Uterus (tissue), 4 donors: ENCODE measurements at regions of chr11 and their contacts with region 1.

Region 1: GRCh38 chr11:8099291-8099899 is 18.4 kb downstream of the TUB start:
- DNase-seq: peak; percentile 77 to 82
- H3K4me3 ChIP-seq: no peak overlapping the region
- H3K27ac ChIP-seq: peak overlapping the region; percentile 51 to 52
- H3K4me1 ChIP-seq: no peaks in the 10 kb centered on the region
- H3K27me3 ChIP-seq: no peaks in the 10 kb centered on the region
- CTCF ChIP-seq: peak; percentile 59 to 83 (median 76)
- POLR2A ChIP-seq: no peak

Region 2: GRCh38 chr11:8006349-8006977 is 92.9 kb before region 1 on chr11:
- intact Hi-C with region 1: loop called (anchors 10 kb)
- DNase-seq: peak; percentile 55 to 67
- H3K4me3 ChIP-seq: no peak overlapping the region
- H3K27ac ChIP-seq: no peak overlapping the region
- H3K4me1 ChIP-seq: no peaks in the 10 kb centered on the region
- H3K27me3 ChIP-seq: no peaks in the 10 kb centered on the region
- CTCF ChIP-seq: peak; percentile 77 to 92 (median 82)
- POLR2A ChIP-seq: no peak

Region 3: GRCh38 chr11:8033305-8034105 is 65.9 kb before region 1 on chr11:
- intact Hi-C with region 1: loop called (anchors 5 kb)
- DNase-seq: peak; percentile 88 to 89
- H3K4me3 ChIP-seq: no peak overlapping the region
- H3K27ac ChIP-seq: no peak overlapping the region
- H3K4me1 ChIP-seq: no peaks in the 10 kb centered on the region
- H3K27me3 ChIP-seq: no peaks in the 10 kb centered on the region
- CTCF ChIP-seq: peak; percentile 89 to 94 (median 92)
- POLR2A ChIP-seq: no peak

Region 4: GRCh38 chr11:8047382-8047781 is 52.0 kb before region 1 on chr11:
- intact Hi-C with region 1: no loop called
- DNase-seq: no peak
- H3K4me3 ChIP-seq: no peak overlapping the region
- H3K27ac ChIP-seq: no peak overlapping the region
- H3K4me1 ChIP-seq: no peaks in the 10 kb centered on the region
- H3K27me3 ChIP-seq: no peaks in the 10 kb centered on the region
- CTCF ChIP-seq: no peak
- POLR2A ChIP-seq: no peak

Region 5: DNA sequence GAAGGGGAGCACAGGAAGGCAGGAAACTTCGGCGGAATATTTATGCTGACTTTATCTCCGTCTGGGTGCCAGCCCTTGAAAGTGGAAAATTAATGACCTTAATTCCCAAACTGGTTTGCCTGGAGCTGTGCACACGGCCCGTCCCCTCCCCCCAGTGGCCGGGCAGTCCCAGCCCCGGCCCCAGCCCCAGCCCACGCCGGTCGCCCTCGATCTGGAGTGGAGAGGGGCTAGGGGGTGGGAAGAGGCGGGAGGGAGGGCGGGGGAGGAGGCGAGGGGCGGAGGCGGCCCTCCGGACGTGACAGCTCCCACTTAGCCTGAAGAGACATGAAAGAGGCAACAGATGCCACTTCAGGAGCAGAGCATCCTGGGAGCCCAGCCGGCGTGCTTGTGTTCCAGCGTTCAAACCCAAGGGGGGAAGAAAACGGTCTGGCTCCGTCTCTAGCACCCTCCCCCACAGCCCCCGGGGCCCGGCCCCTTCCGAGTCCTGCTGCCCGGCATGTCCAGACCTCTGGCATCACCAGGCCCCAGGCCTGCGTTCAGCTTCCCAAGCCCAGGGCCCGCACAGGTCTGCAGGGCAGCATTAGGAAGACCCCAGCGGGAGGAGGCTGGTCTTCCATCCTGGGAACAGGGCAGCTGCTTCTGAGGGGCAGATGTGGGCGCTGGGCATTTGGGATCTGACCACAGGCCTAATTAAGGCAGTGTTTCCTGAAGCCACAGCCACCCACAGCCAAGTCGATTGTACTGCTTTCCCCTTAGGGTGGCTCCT is 184.3 kb after region 1 on chr11:
- intact Hi-C with region 1: no loop called
- DNase-seq: no peak
- H3K4me3 ChIP-seq: peak overlapping the region; percentile 7 to 22
- H3K27ac ChIP-seq: no peak overlapping the region
- H3K4me1 ChIP-seq: no peaks in the 10 kb centered on the region
- H3K27me3 ChIP-seq: no peaks in the 10 kb centered on the region
- CTCF ChIP-seq: no peak
- POLR2A ChIP-seq: no peak